Activated CD8-positive, alpha-beta T cell treated with anti-CD3 and anti-CD28 coated beads, Interleukin-2, amount 10 ng/mL, durations not matched to agents 7 days and 5 days (primary cell): ENCODE measurements at regions of chr2 and their contacts with region 1.

Region 1: GRCh38 chr2:54503192-54503591 is 47.1 kb downstream of the SPTBN1 start:
- DNase-seq: peak; percentile 54
- ATAC-seq: peak; percentile 53
- H3K4me3 Mint-ChIP-seq: no peak overlapping the region
- H3K27ac Mint-ChIP-seq: no peak overlapping the region
- H3K4me1 Mint-ChIP-seq: no peaks in the 10 kb centered on the region
- H3K27me3 Mint-ChIP-seq: peaks cover 16% of the 10 kb centered on the region

Region 2: DNA sequence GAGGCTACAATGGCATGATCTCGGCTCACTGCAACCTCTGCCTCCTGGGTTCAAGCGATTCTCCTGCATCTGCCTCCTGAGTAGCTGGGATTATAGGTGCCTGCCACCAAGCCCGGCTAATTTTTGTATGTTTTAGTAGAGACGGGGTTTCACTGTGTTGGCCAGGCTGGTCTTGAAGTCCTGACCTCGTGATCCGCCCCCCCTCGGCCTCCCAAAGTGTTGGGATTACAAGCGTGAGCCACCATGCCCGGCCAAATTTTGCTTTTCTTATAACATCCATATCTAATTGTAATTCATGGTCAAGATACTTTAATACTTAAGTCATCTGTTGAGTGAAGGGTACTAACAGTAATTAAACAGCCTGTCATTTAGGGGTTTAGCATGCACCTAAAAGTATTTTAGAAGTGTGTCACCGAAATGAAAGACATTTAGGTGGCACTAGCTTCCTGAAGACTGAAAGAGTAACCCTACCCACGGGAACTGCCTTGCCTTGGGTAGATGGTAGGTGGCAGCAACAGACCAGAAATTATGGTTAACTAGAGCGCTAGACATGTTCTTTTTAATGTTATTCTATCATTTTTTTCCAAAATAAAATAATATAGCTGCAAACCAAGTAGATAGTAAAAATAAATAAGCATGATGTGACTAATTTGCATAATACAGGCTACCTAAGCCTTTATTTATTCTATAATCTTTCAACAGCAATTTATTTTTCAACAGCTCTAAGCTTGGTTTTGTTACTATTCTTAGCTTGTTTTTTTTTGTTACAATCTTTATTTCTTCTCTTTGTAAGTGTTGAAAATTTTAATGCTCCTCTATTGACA is 396.3 kb before region 1 on chr2:
- CTCF ChIA-PET with region 1: interaction called, 17 read pairs
- POLR2A ChIA-PET with region 1: interaction called, 4 read pairs
- DNase-seq: peak; percentile 67
- ATAC-seq: peak; percentile 89
- H3K4me3 Mint-ChIP-seq: no peak overlapping the region
- H3K27ac Mint-ChIP-seq: no peak overlapping the region
- H3K4me1 Mint-ChIP-seq: peaks cover 10% of the 10 kb centered on the region
- H3K27me3 Mint-ChIP-seq: peaks cover 6% of the 10 kb centered on the region

Region 3: DNA sequence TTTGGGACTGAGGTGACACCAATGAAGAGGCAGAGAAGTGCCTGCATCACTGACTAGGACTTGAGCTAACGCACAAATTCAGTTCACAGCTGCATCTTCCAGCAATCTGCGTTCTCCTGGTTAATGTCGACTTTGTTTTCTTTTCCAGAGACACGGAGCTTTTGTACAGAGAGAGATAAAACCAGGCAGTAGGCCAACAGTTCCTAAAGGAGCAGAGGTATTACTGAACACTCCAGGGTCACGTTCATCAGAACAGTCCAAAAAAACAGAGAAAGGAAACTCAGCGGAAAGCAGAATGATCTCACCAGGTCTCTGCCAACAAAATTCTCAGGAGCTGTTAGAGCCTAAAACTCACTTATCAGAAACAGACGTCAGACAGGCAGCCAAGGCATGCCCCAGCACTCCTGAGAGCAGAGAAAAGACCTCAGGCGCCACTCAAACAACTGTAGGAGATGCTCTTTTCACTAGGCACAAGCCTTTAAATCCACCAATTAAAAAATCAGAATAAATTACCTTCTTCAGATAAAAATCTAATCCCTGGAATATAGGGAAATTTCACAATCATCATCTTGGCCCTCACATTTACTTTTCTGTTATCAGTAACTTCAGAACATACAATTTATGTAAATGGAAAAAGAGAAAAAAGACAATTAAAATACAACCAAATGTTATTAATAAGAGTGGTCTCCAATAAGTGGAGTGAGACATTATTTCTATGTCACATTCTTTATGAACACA is 143.0 kb before region 1 on chr2:
- CTCF ChIA-PET with region 1: no interaction called
- POLR2A ChIA-PET with region 1: no interaction called
- DNase-seq: no peak
- ATAC-seq: no peak
- H3K4me3 Mint-ChIP-seq: no peak overlapping the region
- H3K27ac Mint-ChIP-seq: no peak overlapping the region
- H3K4me1 Mint-ChIP-seq: no peaks in the 10 kb centered on the region
- H3K27me3 Mint-ChIP-seq: peaks cover 34% of the 10 kb centered on the region